Heart left ventricle (tissue), 16 donors: ENCODE measurements at regions of chr2 and their contacts with region 1.

Region 1: GRCh38 chr2:44044281-44044720 is 48.5 kb upstream of the LRPPRC start:
- DNase-seq: peak; percentile 73 to 90 (median 82)
- ATAC-seq: peak; percentile 77 to 99 (median 94)
- H3K4me3 ChIP-seq: no peak overlapping the region
- H3K27ac ChIP-seq: no peak overlapping the region
- H3K4me1 ChIP-seq: peaks cover 0 to 7% (median 2%) of the 10 kb centered on the region in 12 donors
- H3K27me3 ChIP-seq: no peaks in the 10 kb centered on the region
- CTCF ChIP-seq: peak; percentile 60 to 93 (median 83)
- POLR2A ChIP-seq: no peak

Region 2: DNA sequence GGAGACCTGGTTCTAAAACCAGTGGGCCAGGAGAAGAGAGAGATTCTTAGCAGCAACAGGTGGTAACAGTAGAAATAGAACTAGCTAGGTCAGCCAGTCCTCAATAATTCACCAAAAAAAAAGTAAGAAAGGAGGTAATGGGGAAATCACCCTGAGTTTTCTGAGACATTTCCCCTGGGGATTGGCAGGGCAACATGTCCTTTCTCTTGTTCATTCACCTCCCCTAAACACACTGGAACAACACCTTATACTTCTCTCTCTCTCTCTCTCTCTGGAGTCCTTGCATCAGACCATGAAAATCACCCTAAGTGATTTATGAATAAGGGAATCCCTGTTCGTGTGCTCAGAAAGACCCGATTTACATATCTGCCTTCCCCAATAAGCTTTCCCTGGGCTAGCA is 1748.1 kb before region 1 on chr2:
- intact Hi-C with region 1: no loop called
- DNase-seq: no peak
- ATAC-seq: no peak
- H3K4me3 ChIP-seq: no peak overlapping the region
- H3K27ac ChIP-seq: peak overlapping the region in 1 of 12 donors; percentile 22
- H3K4me1 ChIP-seq: peaks cover 0 to 21% (median 0%) of the 10 kb centered on the region in 12 donors
- H3K27me3 ChIP-seq: no peaks in the 10 kb centered on the region
- CTCF ChIP-seq: no peak
- POLR2A ChIP-seq: no peak

Region 3: DNA sequence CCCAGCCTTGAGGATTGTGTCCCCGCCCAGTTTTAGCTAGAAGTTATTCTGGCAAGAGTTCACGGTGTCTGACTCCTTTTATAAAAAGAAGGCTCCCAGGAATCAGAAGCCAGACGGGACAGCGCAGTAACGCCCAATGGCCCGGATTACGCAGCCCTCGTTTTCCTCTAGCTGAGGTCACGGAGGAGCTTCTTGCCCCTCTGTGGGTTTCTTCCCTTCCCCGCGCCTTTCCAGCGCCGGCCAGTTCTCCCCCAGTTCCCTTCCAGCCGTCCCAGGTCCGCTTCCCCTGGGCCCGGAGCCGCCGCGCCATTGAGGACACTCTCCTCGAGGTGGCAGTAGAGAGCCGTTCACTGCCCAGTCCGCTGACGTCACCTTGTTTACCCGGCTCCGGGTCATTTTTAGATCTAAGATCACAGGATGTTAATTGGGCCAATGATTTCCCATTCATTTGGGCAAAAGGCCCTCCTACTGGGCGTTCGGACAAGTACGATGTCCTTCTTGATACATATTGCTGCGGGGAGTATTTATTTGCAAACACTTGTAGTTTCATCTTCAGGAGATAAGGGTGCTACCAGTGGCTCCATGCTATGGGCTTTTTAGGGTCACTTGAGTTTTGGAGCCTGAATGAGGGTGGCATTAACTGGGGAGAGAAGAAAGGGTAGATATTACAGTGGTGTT is 42.9 kb after region 1 on chr2:
- intact Hi-C with region 1: no loop called
- DNase-seq: peak; percentile 80 to 92 (median 88)
- ATAC-seq: peak; percentile 95 to 97 (median 96)
- H3K4me3 ChIP-seq: peak overlapping the region in 10 of 12 donors; percentile 7 to 59 (median 44)
- H3K27ac ChIP-seq: peak overlapping the region in 9 of 12 donors; percentile 44 to 82 (median 55)
- H3K4me1 ChIP-seq: peaks cover 0 to 12% (median 5%) of the 10 kb centered on the region in 12 donors
- H3K27me3 ChIP-seq: no peaks in the 10 kb centered on the region
- CTCF ChIP-seq: peak; percentile 93 to 99 (median 98)
- POLR2A ChIP-seq: no peak

Region 4: GRCh38 chr2:44100351-44100750 is 56.0 kb after region 1 on chr2:
- intact Hi-C with region 1: no loop called
- DNase-seq: peak; percentile 36 to 74 (median 66)
- ATAC-seq: peak; percentile 45 to 95 (median 93)
- H3K4me3 ChIP-seq: no peak overlapping the region
- H3K27ac ChIP-seq: peak overlapping the region in 1 of 12 donors; percentile 49
- H3K4me1 ChIP-seq: peaks cover 0 to 17% (median 9%) of the 10 kb centered on the region in 12 donors
- H3K27me3 ChIP-seq: no peaks in the 10 kb centered on the region
- CTCF ChIP-seq: no peak
- POLR2A ChIP-seq: no peak

Region 5: DNA sequence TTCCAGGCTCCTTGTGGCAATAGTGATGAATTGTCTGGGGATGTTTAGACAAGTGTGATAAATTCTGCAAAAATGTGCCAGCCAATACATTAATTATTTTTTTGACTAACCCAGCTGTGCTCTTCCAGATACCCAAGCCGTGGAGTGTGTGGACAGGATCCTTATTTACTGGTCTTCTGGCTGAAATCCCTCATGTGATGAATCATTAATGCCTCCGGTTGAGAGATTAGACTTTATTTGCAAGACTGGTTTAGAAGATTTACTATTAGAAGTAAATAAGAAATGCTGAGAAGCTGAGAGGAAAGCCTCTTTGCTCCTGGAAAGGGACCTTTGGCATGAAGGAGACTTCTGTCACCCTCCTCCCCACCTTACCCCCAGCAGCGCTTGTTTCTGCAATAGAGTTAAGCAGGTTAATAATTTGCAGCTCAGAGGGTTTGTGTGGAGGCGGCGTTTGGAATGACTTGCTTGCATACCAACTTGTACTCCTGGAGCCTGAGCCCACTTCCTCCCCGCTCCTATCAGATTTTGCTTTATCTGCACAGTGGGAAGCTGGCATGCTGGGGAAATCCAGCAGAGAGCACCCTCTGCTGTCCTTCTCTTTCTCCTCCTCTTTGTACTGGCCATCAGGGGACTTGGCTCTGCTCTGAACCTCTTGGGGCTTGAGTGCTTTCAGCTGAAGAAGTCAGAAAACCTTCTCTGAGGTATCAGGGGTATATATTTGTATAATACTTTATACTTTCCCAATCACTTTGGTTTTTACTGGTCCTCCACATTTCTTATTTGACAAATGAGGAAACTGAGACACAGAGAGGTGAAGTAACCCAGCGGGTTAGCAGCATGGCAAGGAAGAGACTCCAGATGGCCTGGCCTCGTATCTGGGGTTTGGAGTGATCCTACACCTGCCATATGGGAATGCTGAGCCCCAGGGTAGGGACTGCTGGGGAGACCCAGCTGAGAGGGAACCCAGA is 247.3 kb after region 1 on chr2:
- intact Hi-C with region 1: loop called in 4 of 10 experiments (anchors 5 to 10 kb)
- DNase-seq: peak in 1 of 5 donors; percentile 7
- ATAC-seq: peak in 3 of 4 donors; percentile 61 to 68 (median 66)
- H3K4me3 ChIP-seq: no peak overlapping the region
- H3K27ac ChIP-seq: no peak overlapping the region
- H3K4me1 ChIP-seq: peaks cover 0 to 9% (median 0%) of the 10 kb centered on the region in 12 donors
- H3K27me3 ChIP-seq: no peaks in the 10 kb centered on the region
- CTCF ChIP-seq: peak; percentile 10 to 56 (median 38)
- POLR2A ChIP-seq: no peak

Region 6: GRCh38 chr2:44392338-44392943 is 348.1 kb after region 1 on chr2:
- intact Hi-C with region 1: loop called in 1 of 10 experiments (anchors 5 kb)
- DNase-seq: peak in 3 of 5 donors; percentile 16 to 40 (median 36)
- ATAC-seq: no peak
- H3K4me3 ChIP-seq: no peak overlapping the region
- H3K27ac ChIP-seq: no peak overlapping the region
- H3K4me1 ChIP-seq: no peaks in the 10 kb centered on the region
- H3K27me3 ChIP-seq: no peaks in the 10 kb centered on the region
- CTCF ChIP-seq: peak in 11 of 12 donors; percentile 43 to 75 (median 58)
- POLR2A ChIP-seq: no peak

Region 7: GRCh38 chr2:44955593-44956392 is 911.5 kb after region 1 on chr2:
- intact Hi-C with region 1: loop called in 8 of 10 experiments (anchors 2 to 10 kb)
- DNase-seq: peak; percentile 63 to 88 (median 72)
- ATAC-seq: peak; percentile 74 to 88 (median 82)
- H3K4me3 ChIP-seq: peak overlapping the region; percentile 0 to 47 (median 31)
- H3K27ac ChIP-seq: no peak overlapping the region
- H3K4me1 ChIP-seq: peaks cover 0 to 35% (median 28%) of the 10 kb centered on the region in 12 donors
- H3K27me3 ChIP-seq: peaks cover 27 to 86% (median 59%) of the 10 kb centered on the region in 9 donors
- CTCF ChIP-seq: peak; percentile 76 to 94 (median 88)
- POLR2A ChIP-seq: no peak

Region 8: DNA sequence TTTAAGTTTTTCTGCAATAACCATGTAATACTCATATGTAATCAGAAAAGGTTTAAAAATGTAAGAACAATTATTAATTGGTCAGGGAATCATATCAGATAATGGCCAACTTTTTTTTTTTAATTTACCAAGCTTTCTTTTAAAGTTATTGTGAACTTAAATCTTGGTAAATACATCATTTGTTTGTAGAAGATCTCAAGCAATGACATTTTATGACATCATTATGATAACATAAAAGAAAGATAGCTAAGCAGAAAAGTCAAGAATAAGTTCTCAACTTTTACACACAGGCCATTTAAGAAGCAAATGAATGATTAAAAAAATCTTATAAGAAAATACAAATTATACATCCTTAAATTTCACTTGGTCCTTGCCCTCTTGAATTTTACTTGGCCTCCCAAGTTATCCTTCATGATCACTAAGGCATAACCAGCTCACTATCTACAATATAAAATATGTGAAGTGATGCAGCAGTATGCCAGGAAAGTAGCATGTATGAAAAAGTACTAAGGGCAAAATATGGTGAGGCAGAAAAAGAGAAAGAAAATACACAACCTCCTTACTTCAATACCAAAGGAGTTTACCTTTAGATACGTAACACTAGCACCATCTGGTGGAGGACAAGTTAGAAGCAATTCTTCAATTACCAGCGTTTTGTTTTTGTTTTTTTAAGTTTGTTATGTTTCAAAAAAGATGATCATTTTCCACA is 1450.1 kb after region 1 on chr2:
- intact Hi-C with region 1: loop called in 1 of 10 experiments (anchors 10 kb)
- DNase-seq: no peak
- ATAC-seq: no peak
- H3K4me3 ChIP-seq: no peak overlapping the region
- H3K27ac ChIP-seq: no peak overlapping the region
- H3K4me1 ChIP-seq: no peaks in the 10 kb centered on the region
- H3K27me3 ChIP-seq: no peaks in the 10 kb centered on the region
- CTCF ChIP-seq: peak; percentile 66 to 88 (median 78)
- POLR2A ChIP-seq: no peak